ENCODE measurements at regions of chr2 and their contacts with region 1.

Region 1: DNA sequence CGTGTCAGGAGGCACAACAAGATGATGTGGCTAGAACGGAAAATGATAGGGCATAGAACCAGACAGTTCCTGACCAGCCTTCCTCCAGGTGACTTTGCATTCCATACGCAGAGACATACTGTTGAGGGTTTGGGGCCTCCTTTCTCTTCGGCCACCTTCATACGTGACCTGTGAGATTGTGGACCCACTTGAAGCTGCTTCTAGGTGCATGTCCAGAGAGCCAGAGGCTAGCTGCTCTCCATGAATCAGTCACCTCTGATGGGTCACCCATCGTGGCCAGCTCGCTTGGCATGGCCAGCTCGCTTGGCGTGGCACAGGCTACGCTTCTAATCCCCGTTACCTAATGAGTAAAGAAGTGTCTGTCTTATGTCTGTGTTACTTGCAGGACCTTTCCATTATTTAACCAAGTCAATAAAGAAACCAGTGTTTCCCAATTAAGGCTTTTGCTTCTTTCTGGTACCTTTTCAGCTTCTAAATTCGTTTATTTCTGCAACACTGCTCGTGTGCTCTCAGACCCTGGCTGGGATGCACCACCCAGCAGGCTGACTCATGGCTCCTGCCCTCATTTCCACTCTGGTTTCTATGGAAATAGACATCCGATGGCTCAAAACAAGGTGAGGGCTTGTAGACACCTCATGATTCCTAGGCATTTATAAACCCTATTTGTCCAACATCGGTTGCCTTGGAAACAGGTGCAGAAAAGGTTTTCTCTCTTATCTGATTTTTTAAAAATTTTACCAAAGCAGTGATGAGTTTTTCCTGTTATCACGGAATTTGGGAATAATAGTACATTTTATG is 86.7 kb upstream of the B3GNT7 start:
- DNase-seq: no peak
- CTCF ChIP-seq: no peak

Region 2: DNA sequence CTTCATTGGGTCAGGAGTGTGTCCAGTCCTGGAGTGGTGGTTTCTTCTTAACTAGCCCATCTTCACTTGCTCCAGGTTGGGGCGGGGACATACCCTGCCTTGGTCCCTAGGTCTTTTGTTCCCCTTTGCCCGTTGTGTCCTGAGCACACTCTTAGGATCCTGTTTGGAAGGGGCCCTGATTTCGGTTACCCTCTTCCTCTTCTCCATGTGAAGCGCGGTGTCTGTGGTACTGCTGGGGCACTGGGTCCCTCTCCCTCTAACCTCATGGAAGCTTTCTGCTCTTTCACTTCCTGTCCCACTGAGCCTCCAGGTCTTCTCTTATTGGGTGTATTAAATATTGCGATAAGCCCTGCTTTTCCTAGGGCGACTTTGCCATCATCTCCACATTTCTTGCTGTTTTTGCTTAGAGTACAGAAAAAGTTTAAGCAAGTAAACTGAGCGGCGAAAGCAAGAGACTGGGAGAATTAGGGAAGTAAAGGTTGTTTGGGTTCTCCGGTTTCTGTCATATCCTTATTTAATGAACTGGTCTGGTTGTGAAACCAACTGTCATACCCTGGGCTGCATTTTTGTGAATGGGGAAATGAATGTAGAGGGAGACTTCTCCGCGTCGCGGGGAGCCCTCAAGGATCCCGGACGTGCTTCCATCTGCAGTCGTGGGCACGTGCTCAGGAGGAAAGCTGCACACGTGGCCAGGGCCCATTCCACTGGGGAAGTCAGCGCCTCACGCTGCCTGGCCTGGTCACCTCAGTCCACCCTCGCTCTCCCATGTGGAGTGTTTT is 12.9 kb after region 1 on chr2:
- CTCF ChIA-PET with region 1: interaction called, 12 read pairs
- POLR2A ChIA-PET with region 1: no interaction called
- DNase-seq: peak; percentile 45
- CTCF ChIP-seq: no peak

Region 3: GRCh38 chr2:231353469-231353868 is 44.6 kb after region 1 on chr2:
- CTCF ChIA-PET with region 1: no interaction called
- POLR2A ChIA-PET with region 1: no interaction called
- DNase-seq: no peak
- CTCF ChIP-seq: no peak

Region 4: GRCh38 chr2:231568785-231569435 is 260.1 kb after region 1 on chr2:
- CTCF ChIA-PET with region 1: no interaction called
- POLR2A ChIA-PET with region 1: no interaction called
- DNase-seq: no peak
- CTCF ChIP-seq: no peak